ENCODE measurements at regions of chr1 and their contacts with region 1.

Region 1: GRCh38 chr1:56590520-56591011 is 11.2 kb upstream of the PLPP3 start:
- DNase-seq: no peak
- ATAC-seq: no peak
- H3K4me3 ChIP-seq: no peak overlapping the region
- H3K27ac ChIP-seq: no peak overlapping the region
- H3K4me1 ChIP-seq: no peaks in the 10 kb centered on the region
- H3K27me3 ChIP-seq: no peaks in the 10 kb centered on the region
- CTCF ChIP-seq: no peak
- POLR2A ChIP-seq: no peak

Region 2: GRCh38 chr1:55374801-55375616 is 1215.6 kb before region 1 on chr1:
- intact Hi-C with region 1: loop called (anchors 5 kb)
- DNase-seq: no peak
- ATAC-seq: no peak
- H3K4me3 ChIP-seq: no peak overlapping the region
- H3K27ac ChIP-seq: no peak overlapping the region
- H3K4me1 ChIP-seq: no peaks in the 10 kb centered on the region
- H3K27me3 ChIP-seq: no peaks in the 10 kb centered on the region
- CTCF ChIP-seq: no peak
- POLR2A ChIP-seq: no peak

Region 3: GRCh38 chr1:56533621-56534020 is 56.9 kb before region 1 on chr1:
- intact Hi-C with region 1: no loop called
- DNase-seq: no peak
- ATAC-seq: no peak
- H3K4me3 ChIP-seq: no peak overlapping the region
- H3K27ac ChIP-seq: no peak overlapping the region
- H3K4me1 ChIP-seq: peaks cover 86% of the 10 kb centered on the region
- H3K27me3 ChIP-seq: no peaks in the 10 kb centered on the region
- CTCF ChIP-seq: no peak
- POLR2A ChIP-seq: no peak